ENCODE measurements at regions of chr9 and their contacts with region 1.

Region 1: GRCh38 chr9:11749396-11749795 is 943.8 kb upstream of the TYRP1 start:
- DNase-seq: no peak
- H3K4me3 ChIP-seq: no peak overlapping the region
- H3K27ac ChIP-seq: no peak overlapping the region
- H3K4me1 ChIP-seq: no peaks in the 10 kb centered on the region
- H3K27me3 ChIP-seq: no peaks in the 10 kb centered on the region
- CTCF ChIP-seq: no peak

Region 2: DNA sequence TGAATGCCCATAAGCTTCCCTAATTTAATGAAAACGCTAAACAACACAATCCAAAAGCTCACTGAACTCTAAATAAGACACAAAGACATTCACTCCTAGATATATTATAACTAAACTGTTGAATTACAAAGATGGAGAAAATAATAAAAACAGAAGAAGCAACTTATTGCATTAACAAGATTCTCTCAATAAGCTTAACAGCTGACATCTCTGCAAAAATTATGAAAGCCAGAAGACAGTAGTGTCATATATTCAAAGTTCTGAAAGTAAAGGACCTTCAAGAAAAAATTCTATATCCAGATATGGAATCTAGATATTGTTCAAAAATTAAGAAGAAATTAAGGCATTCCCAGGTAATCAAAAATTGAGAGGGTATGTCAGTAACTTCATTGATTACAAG is 14.0 kb before region 1 on chr9:
- CTCF ChIA-PET with region 1: no interaction called
- POLR2A ChIA-PET with region 1: no interaction called
- intact Hi-C with region 1: loop called (anchors 1 kb)
- DNase-seq: no peak
- H3K4me3 ChIP-seq: no peak overlapping the region
- H3K27ac ChIP-seq: no peak overlapping the region
- H3K4me1 ChIP-seq: no peaks in the 10 kb centered on the region
- H3K27me3 ChIP-seq: no peaks in the 10 kb centered on the region
- CTCF ChIP-seq: no peak

Region 3: GRCh38 chr9:12403721-12404120 is 654.3 kb after region 1 on chr9:
- CTCF ChIA-PET with region 1: no interaction called
- POLR2A ChIA-PET with region 1: no interaction called
- intact Hi-C with region 1: no loop called
- DNase-seq: no peak
- H3K4me3 ChIP-seq: no peak overlapping the region
- H3K27ac ChIP-seq: no peak overlapping the region
- H3K4me1 ChIP-seq: no peaks in the 10 kb centered on the region
- H3K27me3 ChIP-seq: no peaks in the 10 kb centered on the region
- CTCF ChIP-seq: no peak